B cell (primary cell): ENCODE measurements at regions of chr7 and their contacts with region 1.

Region 1: GRCh38 chr7:39894904-39895303 is 55.2 kb upstream of the CDK13 start:
- DNase-seq: no peak
- ATAC-seq: no peak
- H3K4me3 ChIP-seq: no peak overlapping the region
- H3K4me3 Mint-ChIP-seq: no peak overlapping the region
- H3K27ac ChIP-seq: no peak overlapping the region
- H3K27ac Mint-ChIP-seq: no peak overlapping the region
- H3K4me1 ChIP-seq: peaks cover 0 to 3% of the 10 kb centered on the region in 2 donors
- H3K4me1 Mint-ChIP-seq: peaks cover 2% of the 10 kb centered on the region
- H3K27me3 ChIP-seq: peaks cover 0 to 4% (median 0%) of the 10 kb centered on the region in 4 experiments
- H3K27me3 Mint-ChIP-seq: peaks cover 20% of the 10 kb centered on the region
- CTCF ChIP-seq: no peak

Region 2: GRCh38 chr7:39910108-39910869 is 15.4 kb after region 1 on chr7:
- CTCF ChIA-PET with region 1: interaction called, 15 read pairs
- POLR2A ChIA-PET with region 1: no interaction called
- intact Hi-C with region 1: no loop called
- DNase-seq: no peak
- ATAC-seq: no peak
- H3K4me3 ChIP-seq: no peak overlapping the region
- H3K4me3 Mint-ChIP-seq: no peak overlapping the region
- H3K27ac ChIP-seq: no peak overlapping the region
- H3K27ac Mint-ChIP-seq: no peak overlapping the region
- H3K4me1 ChIP-seq: no peaks in the 10 kb centered on the region
- H3K4me1 Mint-ChIP-seq: peaks cover 4% of the 10 kb centered on the region
- H3K27me3 ChIP-seq: no peaks in the 10 kb centered on the region
- H3K27me3 Mint-ChIP-seq: peaks cover 4% of the 10 kb centered on the region
- CTCF ChIP-seq: no peak

Region 3: DNA sequence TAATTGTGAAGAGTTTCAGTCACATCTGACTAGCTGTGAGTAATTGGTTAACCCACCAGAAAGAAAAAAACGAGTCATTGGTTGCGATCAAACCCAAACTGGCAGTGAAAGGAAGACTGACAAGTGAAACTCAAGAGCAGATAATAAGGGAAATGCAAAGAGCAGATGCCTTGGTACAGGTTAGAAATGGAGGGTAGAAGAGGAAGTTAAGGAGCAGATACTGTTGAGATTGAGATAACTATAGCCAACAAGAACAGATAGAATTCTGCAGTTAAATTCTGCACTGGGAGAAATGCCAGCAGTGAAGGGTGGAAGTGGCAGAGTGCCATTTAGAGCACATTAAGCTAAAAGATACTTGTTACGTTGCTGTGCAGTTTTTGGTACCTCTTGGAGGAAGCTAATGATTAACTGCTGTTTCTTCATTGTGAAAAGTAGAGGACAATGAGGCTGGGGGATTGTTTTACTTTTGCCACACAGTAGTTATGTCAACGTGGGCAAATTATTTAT is 120.9 kb after region 1 on chr7:
- CTCF ChIA-PET with region 1: interaction called, 11 read pairs
- POLR2A ChIA-PET with region 1: no interaction called
- intact Hi-C with region 1: no loop called
- DNase-seq: peak; percentile 56
- ATAC-seq: peak; percentile 86
- H3K4me3 ChIP-seq: no peak overlapping the region
- H3K4me3 Mint-ChIP-seq: no peak overlapping the region
- H3K27ac ChIP-seq: peak overlapping the region in 1 of 2 donors; percentile 63
- H3K27ac Mint-ChIP-seq: peak overlapping the region; percentile 15
- H3K4me1 ChIP-seq: peaks cover 8 to 12% of the 10 kb centered on the region in 2 donors
- H3K4me1 Mint-ChIP-seq: peaks cover 16% of the 10 kb centered on the region
- H3K27me3 ChIP-seq: no peaks in the 10 kb centered on the region
- H3K27me3 Mint-ChIP-seq: no peaks in the 10 kb centered on the region
- CTCF ChIP-seq: no peak

Region 4: DNA sequence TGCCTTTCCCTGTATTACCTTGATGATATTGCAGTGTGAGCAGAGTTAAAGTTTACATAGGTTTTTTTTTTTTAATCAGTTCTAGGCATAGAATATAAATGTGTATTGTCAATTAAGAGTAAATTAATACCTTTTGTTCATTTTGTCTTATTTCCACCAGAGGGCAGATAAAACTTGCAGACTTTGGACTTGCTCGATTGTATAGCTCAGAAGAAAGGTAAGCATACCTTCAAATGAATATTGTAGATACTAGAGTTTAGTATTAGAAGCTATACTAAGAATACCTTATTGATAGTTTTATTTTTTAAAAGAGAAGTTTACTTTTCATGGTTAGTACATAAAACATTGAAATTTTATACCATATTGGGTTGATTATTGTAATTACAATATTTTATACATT is 152.8 kb after region 1 on chr7:
- CTCF ChIA-PET with region 1: interaction called, 340 read pairs
- POLR2A ChIA-PET with region 1: no interaction called
- intact Hi-C with region 1: loop called (anchors 1 kb)
- DNase-seq: no peak
- ATAC-seq: no peak
- H3K4me3 ChIP-seq: no peak overlapping the region
- H3K4me3 Mint-ChIP-seq: no peak overlapping the region
- H3K27ac ChIP-seq: no peak overlapping the region
- H3K27ac Mint-ChIP-seq: no peak overlapping the region
- H3K4me1 ChIP-seq: no peaks in the 10 kb centered on the region
- H3K4me1 Mint-ChIP-seq: no peaks in the 10 kb centered on the region
- H3K27me3 ChIP-seq: no peaks in the 10 kb centered on the region
- H3K27me3 Mint-ChIP-seq: no peaks in the 10 kb centered on the region
- CTCF ChIP-seq: no peak

Region 5: DNA sequence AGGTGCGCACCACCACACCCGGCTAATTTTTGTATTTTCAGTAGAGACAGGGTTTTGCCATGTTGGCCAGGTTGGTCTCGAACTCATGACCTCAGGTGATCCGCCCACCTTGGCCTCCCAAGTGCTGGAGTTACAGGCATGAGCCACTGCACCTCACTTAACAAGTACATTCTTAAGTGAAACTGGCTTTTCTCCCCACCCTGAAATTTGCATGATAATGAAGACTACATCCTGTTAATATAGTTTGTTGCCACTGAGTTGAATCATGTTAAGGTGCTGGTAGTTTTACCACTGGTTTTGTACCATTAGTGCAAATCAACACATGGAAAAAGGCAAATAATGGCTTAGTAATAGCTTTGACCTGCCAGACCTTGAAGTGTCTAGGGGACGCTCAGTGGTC is 177.4 kb after region 1 on chr7:
- CTCF ChIA-PET with region 1: interaction called, 10 read pairs
- POLR2A ChIA-PET with region 1: no interaction called
- intact Hi-C with region 1: no loop called
- DNase-seq: no peak
- ATAC-seq: no peak
- H3K4me3 ChIP-seq: no peak overlapping the region
- H3K4me3 Mint-ChIP-seq: no peak overlapping the region
- H3K27ac ChIP-seq: no peak overlapping the region
- H3K27ac Mint-ChIP-seq: no peak overlapping the region
- H3K4me1 ChIP-seq: peaks cover 3 to 7% of the 10 kb centered on the region in 2 donors
- H3K4me1 Mint-ChIP-seq: peaks cover 9% of the 10 kb centered on the region
- H3K27me3 ChIP-seq: no peaks in the 10 kb centered on the region
- H3K27me3 Mint-ChIP-seq: no peaks in the 10 kb centered on the region
- CTCF ChIP-seq: no peak